ENCODE measurements at regions of chr20 and their contacts with region 1.

Region 1: DNA sequence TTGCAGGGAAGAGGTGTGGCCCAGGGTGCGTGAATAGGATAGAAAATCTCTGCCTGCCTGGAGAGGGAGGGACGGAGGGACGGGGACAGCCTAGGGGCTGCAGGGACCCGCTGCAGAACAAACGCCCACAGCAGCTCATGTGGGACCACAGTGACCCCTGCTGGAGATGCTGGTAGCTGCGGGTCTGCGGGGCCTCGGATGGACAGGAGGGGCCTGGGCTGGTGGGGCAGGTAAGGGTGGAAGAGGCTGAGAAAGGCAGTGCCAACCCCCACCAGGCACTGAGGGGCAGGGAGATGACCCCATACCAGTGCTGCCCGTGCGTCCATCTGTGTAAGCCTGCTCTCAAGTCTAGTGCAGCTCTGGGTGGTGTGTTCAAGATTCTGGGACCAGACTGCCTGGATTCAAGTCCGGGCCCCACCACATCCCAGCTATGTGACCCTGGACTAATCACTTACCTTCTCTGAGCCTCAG is 39.4 kb downstream of the KIAA1755 start:
- DNase-seq: peak; percentile 96
- H3K4me3 Mint-ChIP-seq: no peak overlapping the region
- H3K27ac Mint-ChIP-seq: no peak overlapping the region
- H3K4me1 Mint-ChIP-seq: peaks cover 38% of the 10 kb centered on the region
- H3K27me3 Mint-ChIP-seq: no peaks in the 10 kb centered on the region
- CTCF ChIP-seq: peak; percentile 99

Region 2: DNA sequence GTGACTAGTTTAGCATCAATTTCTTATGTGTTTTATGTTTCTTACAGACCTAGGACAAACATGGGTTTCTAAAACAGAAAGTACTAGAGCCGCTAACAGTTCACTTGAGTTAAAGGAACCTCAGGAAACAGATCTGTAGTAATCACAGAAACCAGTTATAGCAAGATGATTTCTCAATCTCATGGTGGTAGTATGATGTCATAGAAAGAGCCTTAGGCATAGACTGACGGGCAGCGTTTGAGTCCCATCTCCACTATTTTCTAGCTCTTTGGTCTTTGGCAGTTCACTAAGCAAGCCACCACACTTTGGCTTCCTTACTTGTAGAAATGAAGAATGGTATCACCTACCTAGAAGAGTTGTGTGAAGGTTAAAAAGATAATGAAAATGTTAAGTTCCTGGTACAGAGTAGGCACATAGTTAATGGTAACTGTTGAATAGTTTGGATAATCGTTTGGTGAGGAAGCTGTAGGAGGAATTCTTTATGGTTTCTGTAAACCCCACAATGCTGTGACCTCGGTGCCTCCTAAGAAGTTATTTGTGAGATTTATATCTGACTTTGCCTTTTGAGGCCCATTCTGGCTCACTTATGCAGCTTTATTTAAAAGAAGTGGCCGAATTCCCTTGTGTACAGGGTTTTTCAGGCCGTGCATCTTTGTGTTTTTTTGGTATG is 506.0 kb before region 1 on chr20:
- CTCF ChIA-PET with region 1: no interaction called
- intact Hi-C with region 1: no loop called
- DNase-seq: no peak
- H3K4me3 Mint-ChIP-seq: no peak overlapping the region
- H3K27ac Mint-ChIP-seq: no peak overlapping the region
- H3K4me1 Mint-ChIP-seq: peaks cover 19% of the 10 kb centered on the region
- H3K27me3 Mint-ChIP-seq: no peaks in the 10 kb centered on the region
- CTCF ChIP-seq: no peak

Region 3: DNA sequence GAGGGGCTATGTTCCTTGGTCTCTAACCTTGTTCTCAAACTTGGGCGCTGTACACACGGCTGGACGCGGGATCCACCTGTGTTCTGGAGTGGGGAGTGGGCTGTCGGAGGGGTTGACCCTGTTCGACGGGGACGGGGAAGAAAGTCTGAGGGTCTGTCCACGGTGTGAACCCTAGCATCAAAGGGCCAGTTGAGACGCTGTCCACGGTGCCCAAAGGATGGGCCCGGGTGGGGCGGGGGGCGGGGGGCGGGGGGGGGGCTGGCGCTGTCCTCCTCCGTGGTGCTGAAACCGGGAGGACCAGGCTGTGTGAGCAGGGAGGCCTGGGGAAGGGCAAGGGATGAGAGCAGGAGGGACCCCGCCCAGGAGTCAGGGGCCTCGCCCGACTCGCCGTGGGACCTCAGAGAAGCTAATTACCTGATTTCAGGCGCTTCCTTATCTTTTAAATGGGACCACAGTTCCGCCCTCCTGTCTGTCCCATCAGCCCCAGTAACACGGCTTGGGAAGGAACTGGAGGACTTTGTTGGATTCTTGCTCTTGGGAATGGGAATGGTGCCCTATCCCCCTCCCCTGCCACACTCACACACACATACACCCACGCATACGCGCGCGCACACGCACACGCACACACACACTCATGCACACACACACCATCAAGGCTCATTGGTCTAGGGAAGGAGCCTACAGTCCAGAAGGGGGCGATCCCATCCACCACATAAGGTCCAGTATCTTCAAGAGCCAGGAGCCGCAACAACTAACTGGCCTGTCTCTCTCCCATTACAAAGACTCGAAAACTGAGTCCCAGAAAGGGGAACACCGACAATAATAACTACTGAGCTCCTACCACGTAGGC is 319.3 kb before region 1 on chr20:
- CTCF ChIA-PET with region 1: no interaction called
- intact Hi-C with region 1: loop called (anchors 2 kb)
- DNase-seq: peak; percentile 62
- H3K4me3 Mint-ChIP-seq: peak overlapping the region; percentile 52
- H3K27ac Mint-ChIP-seq: no peak overlapping the region
- H3K4me1 Mint-ChIP-seq: peaks cover 7% of the 10 kb centered on the region
- H3K27me3 Mint-ChIP-seq: peaks cover 93% of the 10 kb centered on the region
- CTCF ChIP-seq: peak; percentile 46

Region 4: DNA sequence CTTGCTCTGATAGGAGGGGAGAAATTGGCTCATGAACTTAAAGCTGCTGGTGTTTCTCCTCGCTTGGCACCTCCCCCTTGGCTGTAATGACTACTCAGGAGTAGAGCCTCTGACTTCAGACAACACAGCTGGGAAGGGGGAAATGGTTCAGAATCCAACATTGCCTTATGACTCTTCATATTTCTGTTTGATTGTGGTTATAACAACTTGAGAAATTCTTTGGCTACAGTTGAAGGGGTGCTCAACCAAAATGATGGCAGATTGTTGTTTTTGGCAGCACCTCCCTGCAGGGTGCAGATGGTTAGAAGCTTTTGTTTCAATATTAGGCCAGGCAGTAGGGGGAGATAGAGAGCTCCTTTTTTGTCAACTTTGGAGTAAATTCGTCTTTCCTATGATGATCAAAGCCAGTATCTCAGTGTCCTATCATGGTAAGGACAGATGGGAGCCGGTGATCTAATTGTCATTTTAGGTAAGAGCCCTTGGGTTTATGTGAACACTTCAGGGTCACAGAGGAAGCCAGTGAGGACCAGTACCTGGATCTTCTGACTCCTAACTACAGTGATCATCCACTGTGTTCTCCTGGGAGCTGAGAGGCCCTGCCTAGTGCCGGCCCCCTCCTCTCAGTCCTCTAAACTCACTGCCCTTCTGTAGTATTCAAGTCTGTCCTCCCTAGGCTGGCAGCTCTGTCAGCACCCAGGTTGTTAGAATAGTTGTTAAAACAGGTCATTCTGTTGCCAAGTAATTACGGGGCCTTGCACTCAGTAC is 147.7 kb before region 1 on chr20:
- CTCF ChIA-PET with region 1: interaction called, 82 read pairs
- intact Hi-C with region 1: loop called (anchors 1 kb)
- DNase-seq: peak; percentile 77
- H3K4me3 Mint-ChIP-seq: no peak overlapping the region
- H3K27ac Mint-ChIP-seq: no peak overlapping the region
- H3K4me1 Mint-ChIP-seq: peaks cover 26% of the 10 kb centered on the region
- H3K27me3 Mint-ChIP-seq: no peaks in the 10 kb centered on the region
- CTCF ChIP-seq: peak; percentile 92

Region 5: DNA sequence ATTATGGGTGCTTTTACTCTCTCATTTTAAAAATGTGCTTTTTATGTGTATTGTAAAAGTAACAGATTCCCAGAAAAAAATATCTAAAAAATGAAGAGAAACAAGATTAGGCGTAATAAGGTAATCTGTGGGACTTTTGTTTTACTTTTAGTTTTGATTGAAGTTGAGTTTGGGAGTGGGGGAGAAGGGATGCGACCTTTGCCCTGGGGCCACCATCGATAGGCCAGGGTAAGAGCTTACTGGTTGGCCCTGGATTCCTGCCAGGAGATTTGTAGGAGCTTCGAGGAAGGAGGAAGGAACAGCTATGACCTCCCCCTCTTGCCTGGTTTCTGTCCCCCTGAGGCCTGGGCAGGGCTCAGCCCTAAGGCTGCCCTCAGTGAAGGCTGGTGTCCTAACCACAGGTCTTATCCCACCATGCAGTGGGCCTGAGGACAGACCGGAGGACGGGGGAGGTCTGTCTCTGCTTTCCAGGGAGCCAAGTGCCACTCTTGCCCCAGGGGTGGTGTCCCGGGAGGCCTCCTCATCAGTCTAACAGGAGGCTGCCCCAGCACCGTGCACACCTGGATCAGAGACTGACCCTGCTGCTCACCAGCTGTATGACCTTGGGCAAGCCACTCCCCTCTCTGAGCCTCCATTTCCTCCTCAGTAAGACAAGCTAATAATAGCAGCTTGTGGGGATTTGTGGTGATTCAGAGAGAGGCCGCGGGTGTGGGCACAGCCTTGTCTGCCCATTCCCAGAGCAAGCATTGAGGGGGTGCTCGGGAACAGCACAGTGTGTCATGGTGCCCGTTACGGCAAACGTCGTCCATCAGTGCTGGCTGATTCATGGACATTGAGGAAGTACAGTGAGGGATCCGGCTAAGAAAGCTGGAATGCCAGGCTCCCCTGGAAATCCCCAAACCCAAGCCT is 77.3 kb before region 1 on chr20:
- CTCF ChIA-PET with region 1: interaction called, 16 read pairs
- intact Hi-C with region 1: no loop called
- DNase-seq: peak; percentile 90
- H3K4me3 Mint-ChIP-seq: peak overlapping the region; percentile 20
- H3K27ac Mint-ChIP-seq: peak overlapping the region; percentile 94
- H3K4me1 Mint-ChIP-seq: peaks cover 80% of the 10 kb centered on the region
- H3K27me3 Mint-ChIP-seq: no peaks in the 10 kb centered on the region
- CTCF ChIP-seq: no peak